ENCODE measurements at regions of chr10 and their contacts with region 1.

Region 1: GRCh38 chr10:127922675-127923366 is 15.9 kb downstream of the PTPRE start:
- DNase-seq: no peak
- H3K4me3 ChIP-seq: no peak overlapping the region
- H3K27ac ChIP-seq: no peak overlapping the region
- H3K4me1 ChIP-seq: peaks cover 4 to 62% (median 12%) of the 10 kb centered on the region in 4 experiments
- H3K27me3 ChIP-seq: no peaks in the 10 kb centered on the region

Region 2: GRCh38 chr10:127906548-127907377 is 16.1 kb before region 1 on chr10 and contains the start of gene PTPRE:
- CTCF ChIA-PET with region 1: interaction called, 12 read pairs
- POLR2A ChIA-PET with region 1: interaction called, 3 read pairs
- DNase-seq: peak; percentile 52 to 70 (median 67)
- H3K4me3 ChIP-seq: peak within 1 kb of the TSS; percentile 44 to 77 (median 67)
- H3K27ac ChIP-seq: no peak within 1 kb of the TSS
- H3K4me1 ChIP-seq: peaks cover 0 to 14% (median 12%) of the 10 kb centered on the region in 4 experiments
- H3K27me3 ChIP-seq: peaks cover 0 to 38% (median 8%) of the 10 kb centered on the region in 5 experiments